Left ventricle myocardium superior (tissue), 1 donor: ENCODE measurements at regions of chr3 and their contacts with region 1.

Region 1: GRCh38 chr3:158789592-158789991 is 12.3 kb upstream of the MFSD1 start:
- DNase-seq: no peak
- ATAC-seq: peak; percentile 26

Region 2: GRCh38 chr3:158727206-158728060 is 62.2 kb before region 1 on chr3:
- intact Hi-C with region 1: loop called (anchors 2 kb)
- DNase-seq: no peak
- ATAC-seq: peak; percentile 17